PC-3 (cell line): ENCODE measurements at regions of chr2 and their contacts with region 1.

Region 1: DNA sequence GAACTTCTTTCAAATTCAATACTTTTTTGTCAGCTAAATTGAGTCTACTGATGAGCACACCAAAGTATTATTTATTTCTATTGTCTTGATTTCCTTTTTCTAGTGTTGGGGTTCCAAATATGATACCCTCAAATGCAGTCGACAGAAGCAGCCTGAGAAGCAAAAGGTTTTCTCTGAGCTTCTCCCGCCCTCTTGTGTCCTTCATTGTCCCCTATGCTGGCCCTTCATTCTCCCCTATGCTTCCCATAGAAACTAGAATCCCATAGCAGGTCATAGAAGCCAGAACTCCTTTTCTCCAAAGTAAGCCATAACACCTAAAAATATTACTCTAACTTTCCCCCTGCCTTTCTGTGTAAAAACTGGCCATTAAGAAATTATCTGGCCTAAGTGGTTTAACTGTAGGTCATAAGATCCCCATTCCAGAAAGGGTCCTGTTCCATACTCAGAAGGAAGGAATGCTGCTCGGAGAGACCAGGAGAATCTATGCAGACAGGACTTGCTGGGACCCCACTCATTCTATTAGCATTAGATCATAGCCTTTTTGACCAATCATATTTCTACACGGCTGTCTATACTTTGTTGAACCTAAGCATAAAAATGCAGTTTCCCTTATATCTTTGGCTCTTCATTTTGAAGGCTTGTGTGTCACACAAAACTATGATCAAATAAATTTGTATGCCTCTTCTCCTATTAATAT is 764.6 kb upstream of the PKDCC start:
- DNase-seq: peak; percentile 12
- ATAC-seq: no peak
- H3K4me3 ChIP-seq: no peak overlapping the region
- H3K27ac ChIP-seq: no peak overlapping the region
- H3K4me1 ChIP-seq: no peaks in the 10 kb centered on the region
- H3K27me3 ChIP-seq: no peaks in the 10 kb centered on the region
- CTCF ChIP-seq: peak; percentile 41; the same call in 1 of the 2 replicates

Region 2: DNA sequence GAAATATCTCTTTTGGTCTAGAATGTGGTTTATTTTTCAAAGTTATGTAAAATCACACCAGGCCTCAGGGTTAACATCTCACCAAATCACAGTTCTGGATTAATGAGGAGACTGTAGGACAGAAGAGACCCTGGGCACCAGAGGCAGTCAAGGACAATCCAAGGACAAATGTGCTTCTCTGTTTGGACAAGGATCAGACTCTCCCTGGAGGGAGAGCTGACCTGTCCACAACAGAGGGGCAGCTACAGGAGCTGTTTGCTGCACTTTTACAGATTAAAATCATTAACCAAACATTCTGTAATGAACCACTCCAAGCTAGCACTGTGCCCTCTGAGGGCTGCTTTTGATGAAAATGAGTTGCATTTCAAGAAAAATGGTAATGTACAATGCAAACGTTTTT is 140.7 kb before region 1 on chr2:
- CTCF ChIA-PET with region 1: no interaction called
- POLR2A ChIA-PET with region 1: no interaction called
- intact Hi-C with region 1: loop called (anchors 10 kb)
- DNase-seq: no peak
- ATAC-seq: peak; percentile 5
- H3K4me3 ChIP-seq: no peak overlapping the region
- H3K27ac ChIP-seq: peak overlapping the region; percentile 55
- H3K4me1 ChIP-seq: peaks cover 17% of the 10 kb centered on the region
- H3K27me3 ChIP-seq: no peaks in the 10 kb centered on the region
- CTCF ChIP-seq: no peak

Region 3: GRCh38 chr2:41644936-41645335 is 361.7 kb after region 1 on chr2:
- CTCF ChIA-PET with region 1: no interaction called
- POLR2A ChIA-PET with region 1: no interaction called
- intact Hi-C with region 1: no loop called
- DNase-seq: no peak
- ATAC-seq: no peak
- H3K4me3 ChIP-seq: no peak overlapping the region
- H3K27ac ChIP-seq: no peak overlapping the region
- H3K4me1 ChIP-seq: no peaks in the 10 kb centered on the region
- H3K27me3 ChIP-seq: peaks cover 9% of the 10 kb centered on the region; the same call in 1 of the 2 replicates
- CTCF ChIP-seq: no peak